Transverse colon (tissue), 4 donors: ENCODE measurements at regions of chr5 and their contacts with region 1.

Region 1: GRCh38 chr5:53095931-53096525 is 13.5 kb downstream of the MOCS2 start:
- DNase-seq: peak; percentile 73
- H3K4me3 ChIP-seq: no peak overlapping the region
- H3K27ac ChIP-seq: no peak overlapping the region
- H3K4me1 ChIP-seq: no peaks in the 10 kb centered on the region
- H3K27me3 ChIP-seq: no peaks in the 10 kb centered on the region
- CTCF ChIP-seq: peak; percentile 80 to 92 (median 86)
- EP300 ChIP-seq: no peak
- POLR2A ChIP-seq: no peak

Region 2: GRCh38 chr5:52799983-52800393 is 296.0 kb before region 1 on chr5:
- in situ Hi-C with region 1: loop called in 1 of 4 experiments (anchors 25 kb)
- intact Hi-C with region 1: no loop called
- DNase-seq: peak; percentile 96
- H3K4me3 ChIP-seq: peak overlapping the region; percentile 44 to 84 (median 55)
- H3K27ac ChIP-seq: peak overlapping the region; percentile 89 to 98 (median 93)
- H3K4me1 ChIP-seq: peaks cover 9 to 83% (median 67%) of the 10 kb centered on the region in 4 donors
- H3K27me3 ChIP-seq: no peaks in the 10 kb centered on the region
- CTCF ChIP-seq: no peak
- EP300 ChIP-seq: no peak
- POLR2A ChIP-seq: peak; percentile 73

Region 3: GRCh38 chr5:52943285-52943684 is 152.7 kb before region 1 on chr5:
- in situ Hi-C with region 1: loop called in 3 of 4 experiments (anchors 5 to 10 kb)
- intact Hi-C with region 1: no loop called
- DNase-seq: no peak
- H3K4me3 ChIP-seq: no peak overlapping the region
- H3K27ac ChIP-seq: no peak overlapping the region
- H3K4me1 ChIP-seq: peaks cover 0 to 31% (median 7%) of the 10 kb centered on the region in 4 donors
- H3K27me3 ChIP-seq: no peaks in the 10 kb centered on the region
- CTCF ChIP-seq: no peak
- EP300 ChIP-seq: no peak
- POLR2A ChIP-seq: no peak

Region 4: GRCh38 chr5:52948418-52949076 is 147.5 kb before region 1 on chr5:
- in situ Hi-C with region 1: loop called (anchors 5 to 10 kb)
- intact Hi-C with region 1: no loop called
- DNase-seq: peak; percentile 69
- H3K4me3 ChIP-seq: no peak overlapping the region
- H3K27ac ChIP-seq: peak overlapping the region; percentile 1 to 59 (median 32)
- H3K4me1 ChIP-seq: peaks cover 0 to 38% (median 9%) of the 10 kb centered on the region in 4 donors
- H3K27me3 ChIP-seq: no peaks in the 10 kb centered on the region
- CTCF ChIP-seq: peak; percentile 74 to 85 (median 79)
- EP300 ChIP-seq: no peak
- POLR2A ChIP-seq: no peak

Region 5: DNA sequence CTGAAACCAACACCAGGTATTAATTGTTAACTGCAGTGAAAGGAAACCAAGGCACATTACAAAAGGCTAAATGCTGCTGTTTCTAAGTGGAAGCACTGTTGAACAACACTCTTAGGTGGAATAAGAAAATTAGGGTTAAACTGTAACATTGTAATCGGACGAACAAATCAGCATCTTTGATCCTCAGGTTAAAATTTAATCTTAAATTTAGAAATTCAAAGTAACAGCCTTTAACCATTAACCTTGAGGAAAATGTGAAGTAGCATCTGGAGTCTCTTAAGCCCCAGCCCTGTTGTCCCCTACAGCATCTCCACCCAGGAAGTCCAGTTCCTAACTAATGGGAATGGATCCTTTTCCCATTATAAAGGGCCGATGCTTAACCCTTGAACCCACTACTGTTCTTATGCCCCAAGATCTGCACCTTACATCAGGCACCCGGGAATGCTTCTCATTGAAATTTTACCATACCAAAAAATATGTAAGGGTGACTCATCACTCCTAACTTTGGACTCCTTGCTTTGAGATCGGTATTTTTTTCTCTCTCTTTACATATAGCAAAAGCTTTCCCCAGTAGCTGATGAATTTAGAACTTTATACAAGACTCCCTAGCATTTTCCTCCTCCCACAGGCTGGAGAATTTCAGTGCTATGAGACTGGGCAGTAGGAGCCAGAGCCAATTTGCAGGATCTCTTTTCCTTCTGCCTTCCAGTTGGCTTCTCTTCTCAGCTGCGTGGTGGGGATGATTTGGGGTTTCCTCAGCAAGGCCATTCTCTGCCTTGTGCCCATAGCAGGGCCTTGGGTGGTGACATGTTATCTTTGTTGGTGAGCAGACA is 138.9 kb before region 1 on chr5:
- in situ Hi-C with region 1: loop called in 1 of 4 experiments (anchors 10 kb)
- intact Hi-C with region 1: no loop called
- DNase-seq: no peak
- H3K4me3 ChIP-seq: no peak overlapping the region
- H3K27ac ChIP-seq: no peak overlapping the region
- H3K4me1 ChIP-seq: peaks cover 0 to 15% (median 0%) of the 10 kb centered on the region in 4 donors
- H3K27me3 ChIP-seq: no peaks in the 10 kb centered on the region
- CTCF ChIP-seq: no peak
- EP300 ChIP-seq: no peak
- POLR2A ChIP-seq: no peak

Region 6: DNA sequence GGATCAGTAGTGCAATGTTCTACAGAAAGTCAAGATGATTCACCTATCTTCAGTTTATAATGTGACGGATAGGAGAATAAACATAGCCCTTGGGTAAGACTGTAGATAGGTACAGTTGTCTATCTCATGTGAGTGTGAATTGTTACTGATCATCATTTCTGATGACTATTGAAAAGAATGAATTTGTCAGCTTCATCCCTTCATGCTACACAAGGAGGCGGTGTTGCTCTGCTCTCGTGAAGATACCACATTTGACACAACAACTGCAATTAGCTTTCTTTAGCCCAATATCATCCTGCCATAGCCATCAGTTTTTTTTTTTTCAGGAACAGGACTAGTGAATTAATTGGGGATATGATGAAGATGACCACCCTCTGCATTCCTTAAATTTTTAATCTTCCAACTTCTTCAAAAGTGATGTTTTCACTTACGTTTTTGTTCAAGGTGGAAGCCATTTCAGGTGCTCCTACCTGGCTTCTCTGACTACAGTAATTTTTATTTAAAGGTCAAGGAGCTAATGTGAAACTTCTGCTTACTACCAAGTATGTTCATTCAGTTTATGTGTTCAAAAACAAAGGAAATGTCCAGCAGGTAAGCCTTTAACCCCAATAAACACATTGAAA is 166.4 kb after region 1 on chr5:
- in situ Hi-C with region 1: no loop called
- intact Hi-C with region 1: no loop called
- DNase-seq: no peak
- H3K4me3 ChIP-seq: no peak overlapping the region
- H3K27ac ChIP-seq: no peak overlapping the region
- H3K4me1 ChIP-seq: no peaks in the 10 kb centered on the region
- H3K27me3 ChIP-seq: no peaks in the 10 kb centered on the region
- CTCF ChIP-seq: peak; percentile 9 to 21 (median 19)
- EP300 ChIP-seq: no peak
- POLR2A ChIP-seq: no peak

Region 7: DNA sequence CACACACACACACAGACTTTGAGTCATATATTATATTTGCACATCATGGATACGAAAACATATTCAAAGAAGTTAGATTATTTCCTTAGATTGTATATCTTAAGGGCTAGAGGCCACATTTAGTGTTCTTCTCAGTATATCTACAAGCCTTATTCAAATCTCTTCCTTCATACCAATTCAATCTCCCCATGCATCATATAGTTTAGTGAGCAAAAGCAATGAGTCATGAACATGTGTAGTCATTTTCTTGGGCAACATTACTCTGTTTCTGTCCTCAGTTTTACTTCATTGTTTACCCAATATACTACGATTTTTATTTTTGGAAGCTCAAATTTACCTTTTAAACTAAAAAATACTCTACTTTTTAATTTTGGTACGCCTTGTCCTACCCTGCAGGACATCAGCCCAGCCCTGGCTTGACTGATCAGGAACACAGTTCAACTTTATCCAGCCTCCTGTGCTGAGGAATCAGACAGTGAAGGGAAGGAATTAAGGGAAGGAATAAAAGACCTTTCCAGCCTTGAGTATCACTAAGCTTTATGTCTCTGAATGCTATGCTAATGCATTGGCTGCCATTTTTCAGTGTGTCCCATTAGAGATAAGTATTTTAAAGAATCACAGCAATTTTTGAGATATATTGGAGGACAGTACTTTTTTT is 282.7 kb after region 1 on chr5:
- in situ Hi-C with region 1: no loop called
- intact Hi-C with region 1: no loop called
- DNase-seq: no peak
- H3K4me3 ChIP-seq: no peak overlapping the region
- H3K27ac ChIP-seq: no peak overlapping the region
- H3K4me1 ChIP-seq: no peaks in the 10 kb centered on the region
- H3K27me3 ChIP-seq: no peaks in the 10 kb centered on the region
- CTCF ChIP-seq: no peak
- EP300 ChIP-seq: no peak
- POLR2A ChIP-seq: no peak

Region 8: DNA sequence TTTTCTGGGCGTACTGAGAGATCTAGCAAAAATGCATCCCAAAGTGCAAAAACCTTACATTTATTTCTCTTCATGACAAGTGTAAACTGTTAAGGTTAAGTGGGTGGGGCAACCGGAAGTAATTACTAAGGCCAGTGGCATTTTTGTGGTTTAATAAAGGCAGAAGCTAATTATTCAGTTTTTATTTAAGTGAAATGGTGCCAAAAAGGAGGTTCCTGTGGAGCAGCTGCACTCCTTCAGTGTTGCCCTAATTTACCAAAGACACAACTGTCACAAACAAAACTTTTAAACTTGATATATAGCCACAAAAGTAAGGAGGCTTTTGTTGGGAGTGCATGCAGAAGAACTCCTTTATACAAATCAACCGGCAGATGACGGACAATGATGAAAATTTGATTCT is 546.0 kb after region 1 on chr5:
- in situ Hi-C with region 1: no loop called
- intact Hi-C with region 1: no loop called
- DNase-seq: no peak
- H3K4me3 ChIP-seq: no peak overlapping the region
- H3K27ac ChIP-seq: no peak overlapping the region
- H3K4me1 ChIP-seq: peaks cover 0 to 12% (median 3%) of the 10 kb centered on the region in 4 donors
- H3K27me3 ChIP-seq: no peaks in the 10 kb centered on the region
- CTCF ChIP-seq: no peak
- EP300 ChIP-seq: no peak
- POLR2A ChIP-seq: no peak